Endothelial cell of umbilical vein (primary cell): ENCODE measurements at regions of chrX and their contacts with region 1.

Region 1: DNA sequence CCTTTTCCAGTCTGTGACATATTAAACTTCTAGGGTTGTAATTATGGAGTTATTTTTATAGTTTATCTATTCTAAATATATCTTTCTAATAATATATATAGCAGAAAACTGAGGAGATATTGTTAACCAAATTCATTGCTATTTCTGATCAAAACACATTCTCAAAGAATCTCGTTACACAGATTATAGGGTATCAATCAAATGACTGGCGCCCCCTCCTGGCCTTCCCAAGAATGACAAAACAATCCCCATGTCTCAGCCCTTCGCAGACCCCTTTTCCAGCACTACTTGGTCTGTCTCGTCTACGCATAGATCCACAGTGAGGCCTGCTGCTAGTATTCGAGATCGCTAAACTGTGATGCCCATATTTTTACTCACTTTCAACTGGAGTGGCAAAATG is 209.3 kb downstream of the GPC3 start:
- DNase-seq: peak; percentile 1
- H3K4me3 ChIP-seq: no peak overlapping the region
- H3K27ac ChIP-seq: no peak overlapping the region
- H3K4me1 ChIP-seq: no peaks in the 10 kb centered on the region
- H3K27me3 ChIP-seq: no peaks in the 10 kb centered on the region
- CTCF ChIP-seq: peak; percentile 30 to 31
- POLR2A ChIP-seq: no peak

Region 2: GRCh38 chrX:133335027-133335426 is 441.0 kb before region 1 on chrX:
- CTCF ChIA-PET with region 1: no interaction called
- POLR2A ChIA-PET with region 1: no interaction called
- dilution Hi-C with region 1: no loop called
- intact Hi-C with region 1: loop called (anchors 10 kb)
- DNase-seq: no peak
- H3K4me3 ChIP-seq: no peak overlapping the region
- H3K27ac ChIP-seq: no peak overlapping the region
- H3K4me1 ChIP-seq: no peaks in the 10 kb centered on the region
- H3K27me3 ChIP-seq: no peaks in the 10 kb centered on the region
- CTCF ChIP-seq: peak in 1 of 2 donors; percentile 4
- POLR2A ChIP-seq: no peak

Region 3: DNA sequence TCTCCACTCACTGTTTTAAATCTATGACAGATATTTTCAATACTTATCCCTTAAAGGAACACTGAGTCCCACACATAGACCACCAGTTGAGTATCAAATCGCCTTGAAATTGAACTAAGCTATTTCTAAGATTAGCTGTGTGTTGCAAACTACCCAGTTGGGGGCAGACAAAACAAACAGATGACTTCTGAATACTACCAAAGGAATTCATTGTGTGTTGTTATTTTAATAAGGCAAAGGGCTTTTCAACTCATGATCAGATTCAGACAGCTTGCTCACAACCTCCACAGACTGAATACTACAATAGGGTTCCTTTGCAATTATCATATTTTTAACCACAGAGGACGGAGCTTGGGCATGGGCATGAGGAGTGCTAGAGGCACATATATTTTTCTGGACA is 77.8 kb before region 1 on chrX:
- CTCF ChIA-PET with region 1: no interaction called
- POLR2A ChIA-PET with region 1: no interaction called
- dilution Hi-C with region 1: no loop called
- intact Hi-C with region 1: loop called (anchors 1 kb)
- DNase-seq: no peak
- H3K4me3 ChIP-seq: no peak overlapping the region
- H3K27ac ChIP-seq: no peak overlapping the region
- H3K4me1 ChIP-seq: no peaks in the 10 kb centered on the region
- H3K27me3 ChIP-seq: no peaks in the 10 kb centered on the region
- CTCF ChIP-seq: no peak
- POLR2A ChIP-seq: no peak